Mucosa of descending colon (tissue), 3 donors: ENCODE measurements at regions of chr2 and their contacts with region 1.

Region 1: DNA sequence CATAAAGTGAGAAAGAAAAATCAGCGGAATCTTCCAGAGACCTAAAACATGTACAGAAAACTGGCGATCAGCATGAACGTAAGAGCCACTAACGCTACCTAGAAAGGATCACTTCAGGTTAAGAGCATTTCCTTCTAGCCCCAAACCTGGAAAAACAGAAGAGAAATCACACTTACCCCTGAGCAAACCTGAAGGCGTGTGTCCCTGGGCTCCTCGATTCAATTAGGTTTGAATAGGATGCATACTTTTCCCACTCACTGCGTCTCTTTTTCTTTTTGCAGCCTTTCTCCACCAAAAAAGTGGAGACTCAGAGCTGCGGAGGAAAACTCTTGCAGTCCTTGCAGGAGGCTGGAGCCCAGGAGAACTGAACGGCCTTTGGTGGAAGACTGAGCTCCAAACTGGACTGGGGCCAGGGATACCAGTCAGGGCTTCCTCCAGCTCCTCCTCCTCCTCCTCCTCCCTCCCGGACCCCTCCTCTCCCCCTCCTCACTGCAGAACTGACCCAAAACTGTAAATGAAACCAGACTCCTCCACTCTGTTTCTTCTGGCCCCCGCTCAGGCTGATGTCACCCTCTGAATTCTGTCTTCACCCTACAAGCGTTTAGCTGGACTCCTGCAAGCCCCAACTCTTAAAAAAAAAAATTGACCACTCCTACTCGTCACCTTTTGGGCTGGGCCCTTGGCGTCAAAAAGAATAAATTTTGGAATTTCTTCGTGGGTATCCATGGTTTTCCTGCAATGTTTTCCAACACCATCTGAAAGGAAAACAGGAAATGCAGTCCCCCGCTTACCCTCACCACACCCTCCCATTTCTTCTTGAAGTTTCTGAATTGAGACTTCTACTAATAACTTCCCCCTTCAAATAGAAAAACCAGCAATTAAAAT is at the start of gene COL6A3:
- DNase-seq: peak; percentile 41 to 68 (median 43)
- ATAC-seq: peak; percentile 59
- H3K4me3 ChIP-seq: peak within 1 kb of the TSS; percentile 13
- H3K4me1 ChIP-seq: no peaks in the 10 kb centered on the region
- CTCF ChIP-seq: no peak
- total RNA-seq, gene COL6A3: 20.9 to 235 (median 194) TPM

Region 2: GRCh38 chr2:237315170-237315828 is 98.7 kb before region 1 on chr2:
- intact Hi-C with region 1: loop called in 1 of 2 experiments (anchors 10 kb)
- DNase-seq: peak; percentile 48 to 80 (median 65)
- ATAC-seq: peak; percentile 71
- H3K4me3 ChIP-seq: no peak overlapping the region
- H3K4me1 ChIP-seq: peaks cover 7% of the 10 kb centered on the region
- CTCF ChIP-seq: no peak